Activated CD4-positive, alpha-beta memory T cell treated with anti-CD3 and anti-CD28 coated beads, Interleukin-2, amount 10 ng/mL, durations not matched to agents 7 days and 5 days (primary cell): ENCODE measurements at regions of chr6 and their contacts with region 1.

Region 1: DNA sequence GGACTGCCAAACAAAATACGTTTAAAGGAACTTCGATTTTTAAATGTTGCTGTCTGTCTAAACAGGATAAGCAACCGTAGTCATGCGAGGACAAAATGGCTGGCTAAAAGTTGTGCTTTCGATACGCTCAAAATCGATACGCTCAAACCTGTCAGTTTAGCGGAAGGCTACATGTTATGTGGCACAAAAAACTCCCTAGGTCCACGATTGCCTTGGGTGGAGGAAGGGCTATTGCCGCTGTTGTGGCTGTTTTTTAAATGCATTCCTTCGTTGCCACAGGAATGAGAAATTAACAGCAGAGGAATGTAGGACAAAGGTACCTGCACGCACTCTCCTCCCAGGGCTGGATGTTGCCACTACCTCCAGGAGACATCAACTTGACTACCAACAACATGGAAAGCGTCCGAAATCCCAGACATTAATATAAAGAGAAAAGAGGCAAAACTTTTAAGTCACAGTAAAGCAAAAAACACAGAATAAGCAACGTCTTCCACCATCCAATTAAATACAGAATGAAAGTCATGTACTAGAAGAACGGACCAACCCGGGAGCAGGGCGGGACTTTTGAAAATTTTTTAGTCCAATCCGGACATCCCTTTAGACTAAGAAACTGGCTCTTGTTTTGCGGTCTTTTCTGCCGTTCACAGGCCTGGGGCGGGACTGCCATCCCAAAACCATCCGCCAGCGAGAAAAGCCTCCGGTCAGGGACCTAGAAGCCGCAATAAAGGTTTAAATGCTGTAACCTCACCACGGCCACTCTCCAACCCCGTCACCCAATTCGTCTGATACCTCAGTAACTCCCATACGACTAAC is 32.2 kb upstream of the HFE start:
- DNase-seq: peak; percentile 92
- H3K4me3 Mint-ChIP-seq: peak overlapping the region; percentile 83
- H3K27ac Mint-ChIP-seq: peak overlapping the region; percentile 99
- H3K4me1 Mint-ChIP-seq: peaks cover 37% of the 10 kb centered on the region
- H3K27me3 Mint-ChIP-seq: no peaks in the 10 kb centered on the region

Region 2: DNA sequence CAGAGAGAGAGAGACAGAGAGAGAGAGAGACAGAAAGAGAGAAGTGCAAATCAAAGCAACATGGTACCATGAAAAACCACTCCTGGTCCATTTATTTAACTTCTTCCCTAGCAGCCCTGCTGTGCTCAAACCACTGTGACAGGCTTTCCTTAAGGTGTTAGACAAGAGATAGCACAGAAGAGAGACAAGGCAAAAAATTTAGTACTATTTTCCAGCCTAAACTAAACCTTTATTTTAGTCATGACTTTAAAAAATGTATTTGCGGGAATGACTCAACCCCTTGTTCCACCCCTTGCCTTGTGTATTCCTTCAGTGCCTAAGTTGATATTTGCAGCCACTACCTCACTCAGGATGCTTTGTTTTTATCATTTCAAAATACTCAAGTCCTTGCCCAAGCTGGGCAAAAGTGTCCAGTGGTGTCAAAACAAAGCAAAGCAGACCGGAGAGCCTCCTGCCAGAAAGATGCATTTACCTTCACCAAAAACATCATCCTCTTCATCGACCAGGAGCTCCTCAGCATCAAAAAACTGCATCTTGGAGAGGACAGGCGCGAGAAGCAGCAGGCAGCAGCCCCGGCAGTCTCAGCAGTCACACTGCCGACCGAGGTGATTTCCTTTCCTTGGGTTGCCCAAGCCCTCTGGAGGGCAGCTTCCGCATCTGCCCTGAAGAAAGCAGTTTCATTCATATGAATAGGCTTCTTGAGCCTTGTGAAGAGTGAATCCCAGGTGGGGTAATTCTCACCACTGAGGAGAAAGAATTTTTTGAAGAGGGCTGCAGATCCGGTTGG is 1119.5 kb before region 1 on chr6 and contains the start of gene RIPOR2:
- CTCF ChIA-PET with region 1: no interaction called
- POLR2A ChIA-PET with region 1: no interaction called
- DNase-seq: peak; percentile 85
- H3K4me3 Mint-ChIP-seq: peak within 1 kb of the TSS; percentile 99
- H3K27ac Mint-ChIP-seq: peak within 1 kb of the TSS; percentile 98
- H3K4me1 Mint-ChIP-seq: peaks cover 63% of the 10 kb centered on the region
- H3K27me3 Mint-ChIP-seq: no peaks in the 10 kb centered on the region
- total RNA-seq, gene RIPOR2: 234 to 240 TPM

Region 3: GRCh38 chr6:26087284-26088115 is 32.4 kb after region 1 on chr6 and contains the start of gene HFE:
- CTCF ChIA-PET with region 1: interaction called, 353 read pairs
- POLR2A ChIA-PET with region 1: interaction called, 22 read pairs
- DNase-seq: peak; percentile 37
- H3K4me3 Mint-ChIP-seq: peak within 1 kb of the TSS; percentile 77
- H3K27ac Mint-ChIP-seq: peak within 1 kb of the TSS; percentile 47
- H3K4me1 Mint-ChIP-seq: peaks cover 37% of the 10 kb centered on the region
- H3K27me3 Mint-ChIP-seq: peaks cover 8% of the 10 kb centered on the region
- total RNA-seq, gene HFE: 3.1 to 3.4 TPM

Region 4: DNA sequence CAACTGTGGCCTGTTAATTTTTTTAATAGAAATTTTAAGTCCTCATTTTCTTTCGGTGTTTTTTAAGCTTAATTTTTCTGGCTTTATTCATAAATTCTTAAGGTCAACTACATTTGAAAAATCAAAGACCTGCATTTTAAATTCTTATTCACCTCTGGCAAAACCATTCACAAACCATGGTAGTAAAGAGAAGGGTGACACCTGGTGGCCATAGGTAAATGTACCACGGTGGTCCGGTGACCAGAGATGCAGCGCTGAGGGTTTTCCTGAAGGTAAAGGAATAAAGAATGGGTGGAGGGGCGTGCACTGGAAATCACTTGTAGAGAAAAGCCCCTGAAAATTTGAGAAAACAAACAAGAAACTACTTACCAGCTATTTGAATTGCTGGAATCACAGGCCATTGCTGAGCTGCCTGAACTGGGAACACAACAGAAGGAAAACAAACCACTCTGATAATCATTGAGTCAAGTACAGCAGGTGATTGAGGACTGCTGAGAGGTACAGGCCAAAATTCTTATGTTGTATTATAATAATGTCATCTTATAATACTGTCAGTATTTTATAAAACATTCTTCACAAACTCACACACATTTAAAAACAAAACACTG is 42.3 kb after region 1 on chr6:
- CTCF ChIA-PET with region 1: interaction called, 353 read pairs
- POLR2A ChIA-PET with region 1: interaction called, 82 read pairs
- DNase-seq: peak; percentile 64
- H3K4me3 Mint-ChIP-seq: no peak overlapping the region
- H3K27ac Mint-ChIP-seq: no peak overlapping the region
- H3K4me1 Mint-ChIP-seq: peaks cover 10% of the 10 kb centered on the region
- H3K27me3 Mint-ChIP-seq: peaks cover 11% of the 10 kb centered on the region

Region 5: GRCh38 chr6:26103770-26104456 is 48.9 kb after region 1 on chr6:
- CTCF ChIA-PET with region 1: interaction called, 353 read pairs
- POLR2A ChIA-PET with region 1: interaction called, 82 read pairs
- DNase-seq: peak; percentile 93
- H3K4me3 Mint-ChIP-seq: peak overlapping the region; percentile 80
- H3K27ac Mint-ChIP-seq: peak overlapping the region; percentile 99
- H3K4me1 Mint-ChIP-seq: peaks cover 23% of the 10 kb centered on the region
- H3K27me3 Mint-ChIP-seq: no peaks in the 10 kb centered on the region

Region 6: DNA sequence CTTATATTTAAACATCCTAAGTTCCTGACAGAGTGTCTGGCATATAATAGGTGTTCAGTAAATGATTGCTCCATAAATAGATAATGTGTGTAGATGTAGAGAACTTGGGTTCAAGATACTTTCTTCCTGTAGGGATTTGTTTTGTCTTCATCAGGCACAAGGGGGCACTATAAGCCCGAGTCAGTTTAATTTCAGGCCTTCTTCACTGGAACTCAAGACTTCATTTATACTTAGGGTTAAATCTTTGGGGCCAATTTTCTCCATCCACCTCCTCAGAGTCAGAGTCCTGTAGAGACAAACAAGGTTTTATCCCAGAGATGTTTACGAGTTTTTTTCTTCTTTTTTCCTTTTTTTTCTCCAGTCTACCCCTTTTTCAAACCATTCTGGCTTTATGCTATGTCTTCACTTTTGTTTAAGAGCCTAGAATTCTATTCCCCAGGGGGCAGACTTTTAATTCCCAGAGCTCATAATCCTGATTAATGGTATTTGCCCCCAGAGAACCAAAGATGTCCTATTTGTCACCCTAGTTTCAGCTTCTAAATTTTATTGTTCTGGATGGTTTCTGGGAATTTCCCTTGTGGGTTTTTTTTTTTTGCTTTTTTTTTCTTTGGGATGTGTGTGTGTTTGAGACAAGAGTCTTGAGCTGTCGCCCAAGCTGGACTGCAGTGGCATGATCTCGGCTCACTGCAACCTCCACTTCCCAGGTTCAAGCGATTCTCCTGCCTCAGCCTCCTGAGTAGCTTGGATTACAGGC is 120.5 kb after region 1 on chr6:
- CTCF ChIA-PET with region 1: no interaction called
- POLR2A ChIA-PET with region 1: interaction called, 10 read pairs
- DNase-seq: peak; percentile 68
- H3K4me3 Mint-ChIP-seq: peak overlapping the region; percentile 5
- H3K27ac Mint-ChIP-seq: peak overlapping the region; percentile 50
- H3K4me1 Mint-ChIP-seq: peaks cover 44% of the 10 kb centered on the region
- H3K27me3 Mint-ChIP-seq: no peaks in the 10 kb centered on the region

Region 7: GRCh38 chr6:26183581-26184366 is 128.7 kb after region 1 on chr6:
- CTCF ChIA-PET with region 1: no interaction called
- POLR2A ChIA-PET with region 1: interaction called, 18 read pairs
- DNase-seq: peak; percentile 78
- H3K4me3 Mint-ChIP-seq: peak overlapping the region; percentile 75
- H3K27ac Mint-ChIP-seq: peak overlapping the region; percentile 92
- H3K4me1 Mint-ChIP-seq: peaks cover 71% of the 10 kb centered on the region
- H3K27me3 Mint-ChIP-seq: no peaks in the 10 kb centered on the region

Region 8: GRCh38 chr6:26249957-26250697 is 195.1 kb after region 1 on chr6:
- CTCF ChIA-PET with region 1: no interaction called
- POLR2A ChIA-PET with region 1: interaction called, 30 read pairs
- DNase-seq: peak; percentile 84
- H3K4me3 Mint-ChIP-seq: peak overlapping the region; percentile 90
- H3K27ac Mint-ChIP-seq: peak overlapping the region; percentile 93
- H3K4me1 Mint-ChIP-seq: peaks cover 42% of the 10 kb centered on the region
- H3K27me3 Mint-ChIP-seq: no peaks in the 10 kb centered on the region